Cardiac septum (tissue), 1 donor: ENCODE measurements at regions of chr1 and their contacts with region 1.

Region 1: DNA sequence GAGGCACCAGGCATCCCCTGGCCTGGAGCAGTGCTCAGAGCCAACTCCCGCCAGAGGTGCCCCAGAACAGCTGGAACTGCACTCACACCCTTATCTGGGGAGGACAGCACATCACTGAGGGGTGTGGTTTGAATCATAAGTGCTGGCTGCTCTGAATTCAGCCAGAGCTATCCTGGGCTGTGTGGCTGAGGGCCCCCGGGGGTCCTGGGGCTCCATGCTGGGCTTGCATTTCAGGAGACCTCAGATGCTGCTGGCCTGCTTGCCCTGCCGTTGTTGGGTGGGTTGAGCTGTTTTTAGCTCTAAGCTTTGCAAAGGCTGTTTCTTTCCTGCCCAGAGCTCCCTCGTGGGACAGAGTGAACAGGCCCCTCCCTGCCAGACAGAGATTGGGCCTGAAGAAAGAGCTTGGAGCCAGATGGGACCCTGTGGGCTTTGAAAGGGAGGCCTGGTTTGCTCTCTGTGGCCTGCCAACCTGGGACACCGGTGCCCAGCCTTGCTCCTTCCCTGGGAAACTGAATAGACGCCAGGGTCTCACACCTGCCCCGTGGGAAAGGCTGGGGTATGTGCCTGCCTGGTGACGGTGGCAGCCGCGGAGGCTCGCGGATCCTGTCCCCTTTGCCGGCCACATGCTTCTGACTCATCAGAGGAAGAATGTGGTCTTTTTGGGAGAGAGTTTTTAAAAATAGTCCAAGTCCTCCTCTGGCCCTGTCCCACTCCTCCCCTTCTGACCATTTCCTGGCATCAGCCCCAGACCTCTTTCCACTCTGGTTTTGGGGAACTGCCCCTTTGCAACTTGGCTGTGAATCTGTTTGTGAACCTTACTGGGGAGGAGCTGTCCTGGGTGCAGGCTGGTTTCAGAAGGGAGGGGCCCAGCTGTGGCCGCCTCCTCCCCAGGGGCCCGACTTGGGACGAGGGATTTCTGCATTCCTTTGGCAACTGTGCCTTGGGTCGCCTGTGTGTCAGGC is 30.0 kb downstream of the ARHGEF10L start:
- DNase-seq: peak; percentile 91

Region 2: DNA sequence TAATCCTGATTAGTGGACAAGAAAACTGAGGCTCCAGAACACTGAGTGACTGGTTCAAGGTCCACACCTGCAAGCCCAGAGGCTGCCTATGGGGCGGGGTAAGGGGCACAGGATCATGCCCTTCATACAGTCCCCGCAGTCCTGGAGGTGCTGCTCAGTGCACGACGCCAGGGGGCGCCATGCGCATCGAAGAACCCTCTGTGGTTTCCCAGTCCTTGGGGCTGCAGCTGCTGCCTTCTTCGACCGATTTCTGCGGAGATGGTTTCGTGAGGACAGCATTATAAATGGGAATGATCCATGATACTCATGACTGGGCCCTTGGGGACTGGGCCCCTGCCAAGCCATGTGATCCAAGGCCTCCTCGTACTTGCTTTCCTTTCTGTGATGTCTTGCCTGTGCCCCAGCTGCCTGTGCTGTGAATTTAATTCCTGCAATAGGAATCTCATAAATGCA is 67.1 kb before region 1 on chr1:
- intact Hi-C with region 1: loop called (anchors 2 kb)
- DNase-seq: peak; percentile 90

Region 3: DNA sequence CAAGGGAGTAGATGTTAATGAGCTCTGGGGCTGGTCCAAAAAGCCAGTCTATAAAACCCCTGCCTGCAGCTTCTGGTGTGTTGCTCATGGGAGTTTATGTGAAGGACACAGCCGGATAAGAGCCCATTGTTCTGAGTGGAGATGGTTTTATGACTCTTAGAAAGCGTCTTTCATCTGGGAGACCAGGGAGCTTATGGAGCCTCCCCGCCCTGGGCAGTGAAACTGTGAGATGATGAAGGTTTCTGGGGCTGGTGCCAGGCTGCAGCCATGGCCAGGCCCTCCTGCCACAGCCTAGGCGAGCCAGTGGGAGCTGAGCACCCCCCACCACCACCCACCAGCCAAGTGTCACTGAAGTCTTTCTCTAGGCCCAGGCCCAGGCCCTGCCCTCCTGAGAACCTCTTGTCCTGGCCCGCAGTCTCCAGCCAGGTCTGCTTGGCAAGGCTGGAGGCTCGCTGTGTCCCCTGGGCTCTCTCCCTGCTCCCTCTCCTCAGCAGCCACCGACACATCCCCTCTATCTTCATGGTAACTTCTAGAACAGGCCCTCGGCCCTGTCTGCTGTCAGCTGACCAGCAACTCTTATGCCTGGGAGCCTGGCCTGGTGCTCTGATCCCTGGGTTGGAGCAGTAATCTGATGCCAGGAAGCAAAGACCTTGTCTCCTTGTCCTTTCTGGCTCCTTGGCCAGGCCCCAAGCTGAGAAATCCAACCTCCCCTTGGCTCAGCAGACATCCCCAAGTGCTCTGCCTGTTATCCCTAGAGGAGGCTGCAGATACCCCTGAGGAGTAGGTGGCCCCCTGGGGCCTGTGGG is 37.6 kb before region 1 on chr1:
- intact Hi-C with region 1: loop called (anchors 5 kb)
- DNase-seq: peak; percentile 76

Region 4: GRCh38 chr1:17617787-17618557 is 48.5 kb after region 1 on chr1:
- intact Hi-C with region 1: loop called (anchors 1 kb)
- DNase-seq: peak; percentile 88